ENCODE measurements at regions of chr3 and their contacts with region 1.

Region 1: GRCh38 chr3:39279745-39280517 is at the start of gene CX3CR1:
- DNase-seq: no peak
- ATAC-seq: peak in 2 of 4 donors; percentile 16 to 29
- H3K4me3 ChIP-seq: no peak within 1 kb of the TSS
- H3K27ac ChIP-seq: no peak within 1 kb of the TSS
- H3K4me1 ChIP-seq: no peaks in the 10 kb centered on the region
- H3K27me3 ChIP-seq: no peaks in the 10 kb centered on the region
- CTCF ChIP-seq: no peak
- total RNA-seq, gene CX3CR1: 0.23 to 13.0 (median 1.6) TPM

Region 2: GRCh38 chr3:39216176-39216790 is 63.6 kb before region 1 on chr3:
- intact Hi-C with region 1: loop called in 1 of 3 experiments (anchors 10 kb)
- DNase-seq: no peak
- ATAC-seq: peak in 2 of 4 donors; percentile 67 to 80
- H3K4me3 ChIP-seq: no peak overlapping the region
- H3K27ac ChIP-seq: no peak overlapping the region
- H3K4me1 ChIP-seq: no peaks in the 10 kb centered on the region
- H3K27me3 ChIP-seq: no peaks in the 10 kb centered on the region
- CTCF ChIP-seq: no peak

Measured in pancreas (tissue), 10 donors.